ENCODE measurements at regions of chr7 and their contacts with region 1.

Region 1: GRCh38 chr7:30225863-30226613 is 58.4 kb upstream of the ZNRF2 start:
- DNase-seq: peak; percentile 41
- ATAC-seq: peak; percentile 98
- H3K4me3 Mint-ChIP-seq: peak overlapping the region; percentile 39
- H3K27ac Mint-ChIP-seq: peak overlapping the region; percentile 92
- H3K4me1 Mint-ChIP-seq: peaks cover 28% of the 10 kb centered on the region
- H3K27me3 Mint-ChIP-seq: no peaks in the 10 kb centered on the region
- CTCF ChIP-seq: no peak

Region 2: DNA sequence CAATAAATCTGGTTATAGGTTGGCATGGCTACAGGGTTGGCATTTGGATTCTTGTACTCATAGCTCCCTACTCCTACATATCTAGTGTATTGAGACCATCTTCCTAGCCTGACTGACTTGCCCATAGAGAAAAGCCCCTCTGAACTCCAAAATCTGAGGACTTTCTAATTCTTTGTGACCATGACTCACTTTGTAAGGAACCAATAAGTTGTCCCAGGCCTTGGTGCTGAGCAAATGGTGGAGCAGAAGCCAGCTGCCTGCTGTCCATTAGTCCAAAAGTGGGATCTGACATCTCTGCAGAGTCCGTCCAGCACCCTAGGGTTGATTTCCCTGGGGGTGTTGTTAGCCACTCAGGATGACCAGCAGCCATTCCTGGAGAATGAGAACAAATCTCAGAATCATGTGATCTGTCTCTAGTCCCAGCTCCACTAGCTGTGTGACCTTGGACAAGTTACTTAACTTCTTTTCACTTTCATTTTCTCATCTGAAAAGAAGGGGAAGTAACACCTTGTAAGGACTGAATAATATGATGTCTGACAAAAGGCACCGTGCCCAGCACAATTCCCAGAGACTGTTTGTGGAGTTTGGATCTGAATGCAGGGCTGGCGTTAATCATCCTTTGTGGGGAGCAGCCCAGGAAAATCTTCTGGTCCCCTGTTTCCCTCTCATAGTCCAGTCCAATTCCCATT is 47.1 kb before region 1 on chr7:
- CTCF ChIA-PET with region 1: no interaction called
- POLR2A ChIA-PET with region 1: interaction called, 9 read pairs
- intact Hi-C with region 1: loop called (anchors 5 kb)
- DNase-seq: no peak
- ATAC-seq: peak; percentile 91
- H3K4me3 Mint-ChIP-seq: peak overlapping the region; percentile 56
- H3K27ac Mint-ChIP-seq: peak overlapping the region; percentile 79
- H3K4me1 Mint-ChIP-seq: peaks cover 47% of the 10 kb centered on the region
- H3K27me3 Mint-ChIP-seq: no peaks in the 10 kb centered on the region
- CTCF ChIP-seq: no peak

Region 3: DNA sequence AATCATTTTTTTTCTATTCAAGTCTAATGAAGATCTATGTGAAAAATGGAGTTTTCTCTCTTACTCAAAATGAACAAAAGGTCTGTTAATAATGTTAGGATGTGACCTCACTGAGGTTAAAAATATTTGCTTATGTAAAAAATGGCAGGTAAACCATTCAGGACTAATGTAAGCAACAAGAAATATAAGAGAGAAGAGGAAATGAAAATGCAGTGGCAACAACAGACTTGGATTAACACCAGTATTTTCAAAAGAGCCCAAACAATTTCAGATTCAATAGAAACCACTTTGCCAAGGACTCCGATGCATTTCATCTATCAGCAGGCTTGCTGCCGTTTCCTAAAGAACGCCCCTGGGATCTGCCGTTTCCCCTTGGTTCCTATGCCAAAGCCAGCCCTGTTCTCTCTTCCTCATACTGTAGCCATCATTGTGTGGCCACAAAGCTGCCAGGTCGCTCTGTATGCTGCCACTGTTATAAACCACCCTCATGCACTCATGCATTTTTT is 24.8 kb before region 1 on chr7:
- CTCF ChIA-PET with region 1: no interaction called
- POLR2A ChIA-PET with region 1: no interaction called
- intact Hi-C with region 1: loop called (anchors 1 kb)
- DNase-seq: no peak
- ATAC-seq: peak; percentile 81
- H3K4me3 Mint-ChIP-seq: peak overlapping the region; percentile 42
- H3K27ac Mint-ChIP-seq: peak overlapping the region; percentile 77
- H3K4me1 Mint-ChIP-seq: peaks cover 24% of the 10 kb centered on the region
- H3K27me3 Mint-ChIP-seq: no peaks in the 10 kb centered on the region
- CTCF ChIP-seq: no peak

Region 4: GRCh38 chr7:30238721-30239441 is 12.8 kb after region 1 on chr7:
- CTCF ChIA-PET with region 1: interaction called, 3 read pairs
- POLR2A ChIA-PET with region 1: interaction called, 3 read pairs
- intact Hi-C with region 1: loop called (anchors 1 kb)
- DNase-seq: no peak
- ATAC-seq: peak; percentile 69
- H3K4me3 Mint-ChIP-seq: peak overlapping the region; percentile 58
- H3K27ac Mint-ChIP-seq: peak overlapping the region; percentile 88
- H3K4me1 Mint-ChIP-seq: peaks cover 48% of the 10 kb centered on the region
- H3K27me3 Mint-ChIP-seq: no peaks in the 10 kb centered on the region
- CTCF ChIP-seq: no peak

Region 5: GRCh38 chr7:30459591-30460257 is 233.7 kb after region 1 on chr7:
- CTCF ChIA-PET with region 1: no interaction called
- POLR2A ChIA-PET with region 1: no interaction called
- intact Hi-C with region 1: loop called (anchors 5 kb)
- DNase-seq: no peak
- ATAC-seq: no peak
- H3K4me3 Mint-ChIP-seq: no peak overlapping the region
- H3K27ac Mint-ChIP-seq: no peak overlapping the region
- H3K4me1 Mint-ChIP-seq: peaks cover 35% of the 10 kb centered on the region
- H3K27me3 Mint-ChIP-seq: no peaks in the 10 kb centered on the region
- CTCF ChIP-seq: no peak

Measured in activated B cell treated with CpG ODN at 0.5 μM for 24 hours (primary cell).